HEK293 (cell line): ENCODE measurements at regions of chr17 and their contacts with region 1.

Region 1: DNA sequence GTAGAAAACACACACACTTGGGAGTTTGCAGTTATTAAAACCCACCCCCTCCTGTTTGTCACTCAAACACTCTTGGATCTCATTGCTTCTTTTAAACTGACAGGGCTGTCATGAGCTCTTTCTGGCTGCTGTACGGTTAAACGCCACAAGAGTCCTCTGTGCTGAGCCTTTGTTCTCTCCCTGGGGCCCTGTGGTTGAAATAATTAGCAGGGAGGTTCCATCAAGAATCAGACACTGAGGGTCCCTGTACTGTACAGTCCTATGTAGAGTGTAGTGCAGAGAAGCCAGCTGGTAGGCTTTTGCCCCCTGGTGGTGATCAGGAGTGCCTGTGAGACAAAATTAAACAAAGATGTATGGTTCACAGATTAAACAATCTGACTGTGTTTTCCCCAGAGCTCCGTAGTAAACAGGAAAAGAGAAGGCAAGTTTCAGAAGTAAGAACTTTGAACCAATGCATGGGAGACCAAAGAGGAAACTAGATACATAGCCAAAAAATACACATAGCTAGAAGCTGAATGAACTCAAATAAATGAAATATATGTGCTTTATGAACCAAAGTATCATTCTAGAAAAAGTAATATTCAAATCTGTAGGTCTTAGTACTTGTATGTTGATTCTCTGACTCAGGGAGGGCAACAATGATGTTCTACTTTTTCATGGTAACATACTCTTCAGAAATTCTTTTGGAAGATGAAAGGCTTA is 1.4 kb upstream of the SSH2 start:
- H3K4me3 ChIP-seq: peak overlapping the region; percentile 96; the same call in 1 of the 2 replicates
- H3K27ac ChIP-seq: 0 out of 2 replicates have a peak overlapping the region, but pooled peaks have one; percentile 93
- H3K4me1 ChIP-seq: peaks cover 14% of the 10 kb centered on the region
- CTCF ChIP-seq: peak; percentile 83

Region 2: DNA sequence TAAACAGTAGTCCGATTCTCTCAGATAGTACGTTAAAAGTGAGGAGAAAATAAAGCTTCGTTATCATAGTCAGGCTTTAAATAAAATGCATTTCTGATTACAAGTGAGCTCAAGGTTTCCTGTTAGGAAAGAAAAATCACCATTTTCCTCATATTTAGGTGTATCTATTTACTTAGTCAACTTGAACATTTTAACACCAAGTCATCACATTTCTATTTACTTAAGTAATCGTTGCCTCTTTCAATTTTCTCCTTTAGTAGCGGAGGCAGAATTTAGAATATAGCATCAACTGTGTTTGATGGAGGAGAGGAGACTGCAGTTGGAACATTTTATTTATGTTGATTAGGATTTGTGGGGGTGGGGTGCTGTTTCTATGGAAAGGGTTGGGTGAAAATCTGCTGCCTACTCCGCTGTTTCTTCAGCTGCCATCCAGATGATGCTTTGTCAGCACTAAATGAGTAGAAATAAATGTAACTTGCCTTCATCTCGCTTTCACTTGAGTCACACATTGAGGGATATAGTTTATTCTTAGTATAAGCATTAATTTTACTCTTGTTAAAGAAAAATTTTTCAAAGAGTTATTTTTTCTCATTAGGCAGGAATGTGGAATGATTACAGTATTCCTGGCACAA is 406.8 kb before region 1 on chr17:
- CTCF ChIA-PET with region 1: no interaction called
- POLR2A ChIA-PET with region 1: no interaction called
- H3K4me3 ChIP-seq: no peak overlapping the region
- H3K27ac ChIP-seq: no peak overlapping the region
- H3K4me1 ChIP-seq: 0 out of 2 replicates have a peak, but pooled peaks cover 2% of the 10 kb centered on the region
- CTCF ChIP-seq: no peak

Region 3: GRCh38 chr17:29777663-29778062 is 153.7 kb before region 1 on chr17:
- CTCF ChIA-PET with region 1: interaction called, 23 read pairs
- POLR2A ChIA-PET with region 1: no interaction called
- H3K4me3 ChIP-seq: no peak overlapping the region
- H3K27ac ChIP-seq: no peak overlapping the region
- H3K4me1 ChIP-seq: no peaks in the 10 kb centered on the region
- CTCF ChIP-seq: no peak

Region 4: DNA sequence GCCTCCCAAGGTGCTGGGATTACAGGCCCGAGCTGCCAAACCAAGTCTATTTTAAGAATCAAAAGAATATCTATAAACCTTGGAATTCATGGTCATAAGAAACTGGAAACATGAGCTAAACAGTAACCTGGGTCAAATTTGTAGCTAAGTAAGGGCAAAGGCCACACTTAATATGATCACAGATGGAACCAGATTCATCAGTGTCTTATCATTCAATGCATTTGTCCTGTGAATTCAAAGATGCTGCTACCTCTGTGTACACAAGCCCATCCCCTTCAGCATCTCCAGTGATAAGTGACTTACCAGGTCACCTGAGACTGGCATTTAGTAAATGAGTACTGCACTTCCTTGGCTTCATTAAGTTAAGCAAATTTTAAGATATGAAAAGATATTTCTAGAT is 109.5 kb before region 1 on chr17:
- CTCF ChIA-PET with region 1: interaction called, 34 read pairs
- POLR2A ChIA-PET with region 1: interaction called, 4 read pairs
- H3K4me3 ChIP-seq: no peak overlapping the region
- H3K27ac ChIP-seq: no peak overlapping the region
- H3K4me1 ChIP-seq: peaks cover 13% of the 10 kb centered on the region
- CTCF ChIP-seq: no peak

Region 5: DNA sequence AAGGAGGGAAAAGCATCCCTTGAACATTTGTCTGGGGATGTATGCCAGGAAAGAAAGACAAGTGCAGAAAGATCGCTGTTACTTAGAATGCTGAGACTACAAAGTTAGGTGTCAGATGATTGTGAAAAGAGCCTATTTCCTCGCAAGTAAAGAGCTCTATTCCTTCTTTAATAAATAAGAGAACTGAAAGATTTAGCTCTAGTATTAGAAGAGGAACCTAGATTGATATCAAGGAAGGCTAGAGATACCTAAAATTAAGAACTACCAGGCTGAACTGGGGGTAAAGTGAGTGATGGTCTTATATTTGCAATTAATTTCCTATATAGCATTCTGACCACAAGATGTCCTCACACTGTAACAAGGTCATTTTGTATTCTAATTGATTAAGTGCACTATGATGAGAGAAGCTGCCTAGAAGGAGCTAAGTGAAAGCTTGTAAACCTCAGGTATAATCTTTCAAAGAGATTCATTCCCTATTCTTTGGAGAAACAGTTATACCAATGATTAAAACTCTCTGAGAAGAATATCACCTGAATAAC is 63.7 kb before region 1 on chr17:
- CTCF ChIA-PET with region 1: interaction called, 52 read pairs
- POLR2A ChIA-PET with region 1: interaction called, 10 read pairs
- H3K4me3 ChIP-seq: no peak overlapping the region
- H3K27ac ChIP-seq: no peak overlapping the region
- H3K4me1 ChIP-seq: 0 out of 2 replicates have a peak, but pooled peaks cover 7% of the 10 kb centered on the region
- CTCF ChIP-seq: no peak; the same call in 1 of the 2 replicates

Region 6: GRCh38 chr17:29905879-29906167 is 25.6 kb before region 1 on chr17:
- CTCF ChIA-PET with region 1: interaction called, 13 read pairs
- POLR2A ChIA-PET with region 1: interaction called, 3 read pairs
- H3K4me3 ChIP-seq: no peak overlapping the region
- H3K27ac ChIP-seq: no peak overlapping the region
- H3K4me1 ChIP-seq: no peaks in the 10 kb centered on the region
- CTCF ChIP-seq: no peak

Region 7: GRCh38 chr17:30005709-30006320 is 74.4 kb after region 1 on chr17:
- CTCF ChIA-PET with region 1: interaction called, 10 read pairs
- POLR2A ChIA-PET with region 1: interaction called, 4 read pairs
- H3K4me3 ChIP-seq: no peak overlapping the region
- H3K27ac ChIP-seq: no peak overlapping the region
- H3K4me1 ChIP-seq: 0 out of 2 replicates have a peak, but pooled peaks cover 2% of the 10 kb centered on the region
- CTCF ChIP-seq: no peak

Region 8: GRCh38 chr17:30116661-30117551 is 185.5 kb after region 1 on chr17 and contains the start of gene NSRP1:
- CTCF ChIA-PET with region 1: no interaction called
- POLR2A ChIA-PET with region 1: interaction called, 11 read pairs
- H3K4me3 ChIP-seq: peak within 1 kb of the TSS; percentile 47
- H3K27ac ChIP-seq: peak within 1 kb of the TSS; percentile 95
- H3K4me1 ChIP-seq: peaks cover 11% of the 10 kb centered on the region
- CTCF ChIP-seq: no peak